Stomach (tissue), 19 donors: ENCODE measurements at regions of chr19 and their contacts with region 1.

Region 1: DNA sequence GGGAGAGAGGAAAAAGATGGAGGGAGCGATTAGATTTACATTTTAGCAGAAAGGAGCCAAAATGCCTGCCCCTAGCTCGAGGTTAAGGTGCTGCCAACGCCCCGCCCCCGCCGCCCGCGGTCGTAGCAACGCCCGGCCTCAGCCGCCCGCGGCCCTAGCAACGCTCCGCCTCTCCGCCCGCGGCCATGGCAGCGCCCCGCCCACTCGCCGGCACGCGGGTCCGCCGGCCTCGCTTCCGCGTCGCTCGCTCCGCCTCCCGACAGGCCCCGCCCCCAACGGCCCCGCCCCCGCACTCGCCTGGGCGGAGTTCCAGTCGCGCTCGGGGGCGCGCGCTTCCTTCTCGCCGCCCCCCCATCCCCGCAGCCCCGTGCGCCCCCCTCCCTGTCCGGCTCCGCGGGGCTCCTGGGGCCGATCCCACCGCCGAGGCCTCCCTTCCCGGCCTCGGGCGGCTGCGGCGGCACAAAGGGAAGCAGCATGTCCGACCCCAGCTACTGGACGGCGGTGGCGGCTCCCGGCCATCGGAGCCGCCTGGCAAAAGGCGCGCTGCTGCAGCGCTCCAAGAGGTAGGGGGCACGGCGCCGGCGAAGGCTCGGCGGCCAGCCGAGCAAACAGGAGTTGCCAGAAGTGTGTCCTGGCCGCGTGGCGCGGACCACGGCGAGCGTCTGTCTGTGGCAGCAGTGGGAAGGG is 20.3 kb downstream of the MAST3 start:
- DNase-seq: peak; percentile 95 to 98
- H3K4me3 ChIP-seq: peak overlapping the region; percentile 73 to 78 (median 76)
- H3K27ac ChIP-seq: peak overlapping the region; percentile 61 to 86 (median 73)
- H3K4me1 ChIP-seq: peaks cover 21 to 40% (median 30%) of the 10 kb centered on the region in 4 donors
- H3K27me3 ChIP-seq: no peaks in the 10 kb centered on the region
- CTCF ChIP-seq: no peak
- EP300 ChIP-seq: no peak
- POLR2A ChIP-seq: no peak

Region 2: DNA sequence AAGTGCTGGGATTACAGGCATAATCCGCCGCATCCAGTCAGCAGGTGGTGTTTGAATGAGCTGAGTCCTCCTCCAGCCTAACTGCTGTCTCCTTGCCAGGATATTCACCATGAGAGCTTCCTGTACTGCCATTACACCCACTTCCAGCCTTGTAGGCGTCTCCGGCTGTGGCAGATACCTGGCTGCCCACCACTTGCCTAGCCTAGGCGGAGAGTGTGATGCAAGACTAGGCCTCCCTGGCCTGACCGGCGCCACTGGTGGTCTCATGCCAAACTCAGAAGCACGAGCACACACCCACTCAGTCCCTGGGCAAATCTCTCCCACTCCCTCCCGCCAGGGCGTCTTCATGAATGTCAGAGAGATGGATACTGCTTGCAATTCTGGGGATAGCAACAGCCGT is 47.7 kb before region 1 on chr19:
- intact Hi-C with region 1: no loop called
- DNase-seq: no peak
- H3K4me3 ChIP-seq: no peak overlapping the region
- H3K27ac ChIP-seq: no peak overlapping the region
- H3K4me1 ChIP-seq: no peaks in the 10 kb centered on the region
- H3K27me3 ChIP-seq: peaks cover 0 to 10% (median 0%) of the 10 kb centered on the region in 3 donors
- CTCF ChIP-seq: no peak
- EP300 ChIP-seq: no peak
- POLR2A ChIP-seq: no peak

Region 3: DNA sequence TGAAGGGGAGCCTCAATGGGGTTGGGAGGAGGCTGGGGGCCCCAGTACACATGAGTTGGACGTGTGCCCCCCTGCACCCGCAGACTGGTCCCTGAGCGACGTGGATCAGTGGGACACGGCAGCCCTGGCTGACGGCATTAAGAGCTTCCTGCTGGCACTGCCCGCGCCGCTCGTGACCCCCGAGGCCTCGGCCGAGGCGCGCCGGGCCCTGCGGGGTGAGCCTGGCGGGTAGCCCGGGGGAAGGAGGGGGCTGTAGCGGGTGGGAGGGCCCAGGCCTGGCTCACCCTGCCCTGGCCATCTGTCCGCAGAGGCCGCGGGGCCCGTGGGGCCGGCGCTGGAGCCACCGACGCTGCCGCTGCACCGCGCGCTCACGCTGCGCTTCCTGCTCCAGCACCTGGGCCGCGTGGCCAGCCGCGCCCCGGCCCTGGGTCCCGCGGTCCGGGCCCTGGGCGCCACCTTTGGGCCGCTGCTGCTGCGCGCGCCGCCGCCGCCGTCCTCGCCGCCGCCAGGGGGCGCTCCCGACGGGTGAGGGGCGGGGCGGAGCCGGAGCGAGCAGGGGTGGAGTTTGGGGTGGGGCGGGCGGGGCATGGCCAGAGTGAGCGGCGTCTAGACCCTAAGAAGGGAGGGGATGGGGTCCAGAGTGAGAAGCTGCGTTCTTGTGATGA is 43.3 kb after region 1 on chr19:
- intact Hi-C with region 1: loop called (anchors 10 kb)
- DNase-seq: peak; percentile 87 to 89
- H3K4me3 ChIP-seq: peak overlapping the region; percentile 42 to 51 (median 48)
- H3K27ac ChIP-seq: peak overlapping the region; percentile 77 to 91 (median 81)
- H3K4me1 ChIP-seq: peaks cover 35 to 48% (median 43%) of the 10 kb centered on the region in 4 donors
- H3K27me3 ChIP-seq: no peaks in the 10 kb centered on the region
- CTCF ChIP-seq: peak in 3 of 7 experiments; percentile 48 to 98 (median 58)
- EP300 ChIP-seq: no peak
- POLR2A ChIP-seq: no peak

Region 4: GRCh38 chr19:18251587-18252369 is 133.9 kb after region 1 on chr19:
- intact Hi-C with region 1: loop called (anchors 5 kb)
- DNase-seq: peak; percentile 86 to 89
- H3K4me3 ChIP-seq: no peak overlapping the region
- H3K27ac ChIP-seq: no peak overlapping the region
- H3K4me1 ChIP-seq: peaks cover 0 to 20% (median 9%) of the 10 kb centered on the region in 4 donors
- H3K27me3 ChIP-seq: peaks cover 0 to 24% (median 0%) of the 10 kb centered on the region in 3 donors
- CTCF ChIP-seq: peak in 6 of 7 experiments; percentile 73 to 98 (median 96)
- EP300 ChIP-seq: no peak
- POLR2A ChIP-seq: no peak